Naive thymus-derived CD4-positive, alpha-beta T cell (primary cell): ENCODE measurements at regions of chr12 and their contacts with region 1.

Region 1: DNA sequence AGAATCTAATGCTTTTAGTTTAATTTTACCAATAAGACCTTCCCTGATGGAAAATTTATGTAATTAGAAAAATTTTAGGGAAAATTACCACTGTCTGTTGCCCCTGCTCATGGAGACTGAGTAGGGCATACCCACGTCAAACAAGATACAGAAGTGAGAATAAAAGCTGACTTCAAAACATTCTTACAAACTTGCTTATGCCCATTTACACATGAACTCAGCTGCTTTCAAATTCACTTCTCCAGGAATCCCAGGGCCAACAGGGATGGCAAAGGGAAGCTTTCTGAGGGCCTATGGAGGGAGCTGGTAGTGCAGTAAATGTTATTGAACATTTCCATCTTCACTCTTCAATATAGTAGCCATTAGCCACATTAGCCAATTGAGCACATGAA is 4.8 kb upstream of the NINJ2 start:
- DNase-seq: no peak
- ATAC-seq: no peak
- H3K4me3 ChIP-seq: no peak overlapping the region
- H3K4me3 Mint-ChIP-seq: no peak overlapping the region
- H3K27ac ChIP-seq: no peak overlapping the region
- H3K27ac Mint-ChIP-seq: no peak overlapping the region
- H3K4me1 ChIP-seq: peaks cover 27 to 39% of the 10 kb centered on the region in 2 donors
- H3K4me1 Mint-ChIP-seq: peaks cover 40 to 70% (median 66%) of the 10 kb centered on the region in 7 donors
- H3K27me3 ChIP-seq: no peaks in the 10 kb centered on the region
- H3K27me3 Mint-ChIP-seq: peaks cover 0 to 2% (median 0%) of the 10 kb centered on the region in 5 donors

Region 2: GRCh38 chr12:650983-651382 is 17.1 kb before region 1 on chr12:
- CTCF ChIA-PET with region 1: no interaction called
- POLR2A ChIA-PET with region 1: interaction called, 7 read pairs
- intact Hi-C with region 1: loop called in 1 of 2 experiments (anchors 2 kb)
- DNase-seq: peak in 2 of 9 donors; percentile 37 to 41
- ATAC-seq: no peak
- H3K4me3 ChIP-seq: no peak overlapping the region
- H3K4me3 Mint-ChIP-seq: no peak overlapping the region
- H3K27ac ChIP-seq: no peak overlapping the region
- H3K27ac Mint-ChIP-seq: peak overlapping the region in 1 of 9 donors; percentile 13
- H3K4me1 ChIP-seq: no peaks in the 10 kb centered on the region
- H3K4me1 Mint-ChIP-seq: peaks cover 2 to 21% (median 10%) of the 10 kb centered on the region in 7 donors
- H3K27me3 ChIP-seq: no peaks in the 10 kb centered on the region
- H3K27me3 Mint-ChIP-seq: no peaks in the 10 kb centered on the region

Region 3: DNA sequence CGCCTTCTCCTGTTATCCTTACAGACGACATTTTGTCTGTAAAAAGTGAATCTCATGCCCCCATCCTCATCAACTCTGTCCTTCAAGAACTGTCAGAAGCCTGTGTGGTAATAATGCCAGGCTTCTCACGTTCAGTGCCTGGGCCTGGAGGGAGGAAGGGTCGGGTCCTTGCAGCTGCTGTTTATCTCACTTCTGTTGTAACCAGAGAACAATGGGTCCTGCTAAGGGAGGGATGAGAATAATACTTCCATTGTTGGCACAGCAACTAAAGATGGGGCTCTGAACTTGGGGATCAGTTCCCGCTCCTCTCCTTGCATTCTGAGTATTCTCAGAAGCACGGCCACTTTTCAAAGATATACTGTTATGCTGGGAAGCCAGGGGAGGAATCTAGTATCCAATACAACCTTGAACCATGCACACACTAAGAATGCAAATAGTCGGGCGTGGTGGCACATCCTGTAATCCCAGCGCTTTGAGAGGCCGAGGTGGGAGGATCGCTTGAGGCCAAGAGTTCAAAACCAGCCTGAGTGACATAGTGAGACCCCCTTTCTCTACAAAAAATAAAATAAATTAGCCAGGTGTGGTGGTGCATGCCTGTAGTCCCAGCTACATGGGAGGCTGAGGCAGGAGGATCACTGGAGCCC is 33.9 kb after region 1 on chr12:
- CTCF ChIA-PET with region 1: no interaction called
- POLR2A ChIA-PET with region 1: no interaction called
- intact Hi-C with region 1: no loop called
- DNase-seq: no peak
- ATAC-seq: no peak
- H3K4me3 ChIP-seq: no peak overlapping the region
- H3K4me3 Mint-ChIP-seq: no peak overlapping the region
- H3K27ac ChIP-seq: no peak overlapping the region
- H3K27ac Mint-ChIP-seq: no peak overlapping the region
- H3K4me1 ChIP-seq: peaks cover 7 to 11% of the 10 kb centered on the region in 2 donors
- H3K4me1 Mint-ChIP-seq: peaks cover 13 to 42% (median 32%) of the 10 kb centered on the region in 7 donors
- H3K27me3 ChIP-seq: no peaks in the 10 kb centered on the region
- H3K27me3 Mint-ChIP-seq: no peaks in the 10 kb centered on the region

Region 4: GRCh38 chr12:774051-774614 is 106.0 kb after region 1 on chr12:
- CTCF ChIA-PET with region 1: no interaction called
- POLR2A ChIA-PET with region 1: no interaction called
- intact Hi-C with region 1: no loop called
- DNase-seq: no peak
- ATAC-seq: no peak
- H3K4me3 ChIP-seq: no peak overlapping the region
- H3K4me3 Mint-ChIP-seq: peak overlapping the region in 9 of 10 donors; percentile 14 to 63 (median 34)
- H3K27ac ChIP-seq: peak overlapping the region; percentile 11
- H3K27ac Mint-ChIP-seq: peak overlapping the region in 8 of 9 donors; percentile 60 to 88 (median 74)
- H3K4me1 ChIP-seq: peaks cover 39 to 53% of the 10 kb centered on the region in 2 donors
- H3K4me1 Mint-ChIP-seq: peaks cover 38 to 96% (median 91%) of the 10 kb centered on the region in 7 donors
- H3K27me3 ChIP-seq: no peaks in the 10 kb centered on the region
- H3K27me3 Mint-ChIP-seq: no peaks in the 10 kb centered on the region